IMR-90 (cell line): ENCODE measurements at regions of chr1 and their contacts with region 1.

Region 1: DNA sequence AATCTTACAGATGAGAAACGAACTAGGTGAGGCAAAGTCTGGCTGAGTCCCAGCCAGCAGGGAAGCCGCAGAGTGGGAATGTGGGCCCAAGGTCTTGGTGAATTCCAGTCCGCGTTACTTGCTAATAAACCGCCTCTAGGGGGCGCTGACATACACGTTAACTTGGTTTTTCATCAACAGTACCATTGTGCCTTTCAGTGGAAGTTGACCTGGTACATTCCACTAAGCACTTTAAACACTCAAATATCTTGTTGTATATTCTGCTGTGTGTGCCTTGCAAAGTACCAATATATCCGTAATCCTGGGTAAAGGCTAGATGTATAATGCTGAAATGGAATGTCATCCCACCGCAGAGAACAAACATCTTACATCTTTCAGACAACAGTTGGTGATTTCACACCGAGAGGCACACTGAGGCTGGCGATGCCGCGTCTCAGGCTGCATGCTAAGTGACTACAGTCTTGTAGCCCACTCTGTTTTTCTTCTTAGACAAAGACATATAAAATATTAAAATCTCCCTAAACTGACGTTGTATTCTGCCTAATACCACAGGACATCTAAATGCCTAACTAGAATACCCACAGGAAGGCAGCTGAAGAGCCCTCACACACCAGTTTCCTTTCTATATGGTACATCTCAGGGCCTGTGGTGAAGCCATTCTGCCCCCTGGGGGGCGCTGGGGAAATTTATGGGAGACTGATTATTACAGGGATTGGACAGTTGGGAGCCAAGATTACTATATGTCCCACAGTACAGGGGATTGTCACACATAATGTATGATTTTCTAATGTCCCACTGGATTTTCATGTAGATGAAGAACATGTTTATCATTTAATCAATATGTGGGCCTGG is 49.2 kb upstream of the C1orf198 start:
- DNase-seq: peak; percentile 67
- ATAC-seq: peak; percentile 91
- H3K4me3 ChIP-seq: no peak overlapping the region
- H3K27ac ChIP-seq: no peak overlapping the region
- H3K4me1 ChIP-seq: peaks cover 6% of the 10 kb centered on the region; the same call in 1 of the 2 replicates
- H3K27me3 ChIP-seq: no peaks in the 10 kb centered on the region
- CTCF ChIP-seq: peak; percentile 89
- POLR2A ChIP-seq: 0 out of 2 replicates have a peak, but pooled peaks have one; percentile 31
- RAD21 ChIP-seq: peak; percentile 94

Region 2: DNA sequence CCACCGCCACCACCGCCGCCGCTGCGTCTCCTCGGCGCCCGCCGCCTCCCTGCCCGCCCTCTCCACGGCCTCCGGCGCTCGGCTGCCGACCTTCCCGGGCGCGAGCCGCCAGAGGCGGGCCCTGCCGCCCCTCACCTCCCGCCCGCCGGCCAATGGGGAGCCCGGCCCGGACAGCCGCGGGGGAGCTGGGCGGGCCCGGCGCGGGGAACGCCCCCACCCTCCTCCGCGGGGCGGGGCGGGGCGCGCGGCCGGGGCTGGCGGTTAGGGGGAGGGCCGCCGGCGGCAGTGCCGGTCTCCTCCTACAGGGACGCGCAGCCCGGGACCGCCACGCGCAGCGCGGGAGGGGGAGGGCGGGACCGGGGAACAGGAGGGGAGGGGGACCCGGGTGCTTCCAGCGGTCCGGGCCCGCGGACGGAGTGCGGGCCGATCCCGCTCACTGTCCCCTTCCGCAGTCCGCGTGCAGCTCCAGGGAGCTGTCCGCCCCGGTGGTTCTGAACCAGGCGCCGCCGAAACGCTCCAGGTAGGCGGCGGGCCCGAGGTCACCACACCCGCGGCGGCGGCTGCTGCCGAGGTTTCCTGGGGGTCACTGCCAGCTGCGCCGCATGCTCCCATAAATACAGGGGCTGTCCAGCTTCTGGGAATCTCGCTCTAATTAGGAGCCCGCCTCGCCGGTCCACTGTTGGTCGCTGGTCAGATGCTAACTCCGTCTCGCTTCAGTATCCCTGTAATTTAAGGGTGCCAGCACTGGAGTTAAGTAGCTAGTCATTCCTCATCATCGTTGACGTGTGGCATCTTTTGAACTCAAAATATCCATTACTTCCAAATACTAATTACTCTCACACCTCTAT is 491.0 kb before region 1 on chr1 and contains the start of gene PGBD5:
- CTCF ChIA-PET with region 1: no interaction called
- POLR2A ChIA-PET with region 1: no interaction called
- dilution Hi-C with region 1: no loop called
- in situ Hi-C with region 1: no loop called
- intact Hi-C with region 1: loop called (anchors 10 kb)
- DNase-seq: peak; percentile 46
- ATAC-seq: peak; percentile 99
- H3K4me3 ChIP-seq: peak within 1 kb of the TSS; percentile 39
- H3K27ac ChIP-seq: no peak within 1 kb of the TSS
- H3K4me1 ChIP-seq: no peaks in the 10 kb centered on the region; the same call in 1 of the 2 replicates
- H3K27me3 ChIP-seq: peaks cover 28% of the 10 kb centered on the region
- CTCF ChIP-seq: no peak
- POLR2A ChIP-seq: no peak
- RAD21 ChIP-seq: no peak
- total RNA-seq, gene PGBD5: 0.18 and 0.28 TPM in 2 replicates

Region 3: GRCh38 chr1:230797942-230798418 is 119.5 kb before region 1 on chr1:
- CTCF ChIA-PET with region 1: interaction called, 20 read pairs
- POLR2A ChIA-PET with region 1: no interaction called
- dilution Hi-C with region 1: no loop called
- in situ Hi-C with region 1: no loop called
- intact Hi-C with region 1: loop called (anchors 1 kb)
- DNase-seq: peak; percentile 73
- ATAC-seq: peak; percentile 93
- H3K4me3 ChIP-seq: no peak overlapping the region
- H3K27ac ChIP-seq: no peak overlapping the region
- H3K4me1 ChIP-seq: no peaks in the 10 kb centered on the region
- H3K27me3 ChIP-seq: no peaks in the 10 kb centered on the region
- CTCF ChIP-seq: peak; percentile 89
- POLR2A ChIP-seq: no peak
- RAD21 ChIP-seq: peak; percentile 97